Stomach (tissue), 19 donors: ENCODE measurements at regions of chr9 and their contacts with region 1.

Region 1: GRCh38 chr9:109817846-109818472 is 38.0 kb downstream of the PALM2AKAP2 start:
- DNase-seq: peak; percentile 61 to 97
- H3K4me3 ChIP-seq: no peak overlapping the region
- H3K27ac ChIP-seq: peak overlapping the region in 3 of 5 donors; percentile 30 to 58 (median 49)
- H3K4me1 ChIP-seq: peaks cover 0 to 10% (median 0%) of the 10 kb centered on the region in 4 donors
- H3K27me3 ChIP-seq: peaks cover 0 to 3% (median 0%) of the 10 kb centered on the region in 3 donors
- CTCF ChIP-seq: peak in 5 of 7 experiments; percentile 41 to 81 (median 74)
- EP300 ChIP-seq: no peak
- POLR2A ChIP-seq: no peak

Region 2: DNA sequence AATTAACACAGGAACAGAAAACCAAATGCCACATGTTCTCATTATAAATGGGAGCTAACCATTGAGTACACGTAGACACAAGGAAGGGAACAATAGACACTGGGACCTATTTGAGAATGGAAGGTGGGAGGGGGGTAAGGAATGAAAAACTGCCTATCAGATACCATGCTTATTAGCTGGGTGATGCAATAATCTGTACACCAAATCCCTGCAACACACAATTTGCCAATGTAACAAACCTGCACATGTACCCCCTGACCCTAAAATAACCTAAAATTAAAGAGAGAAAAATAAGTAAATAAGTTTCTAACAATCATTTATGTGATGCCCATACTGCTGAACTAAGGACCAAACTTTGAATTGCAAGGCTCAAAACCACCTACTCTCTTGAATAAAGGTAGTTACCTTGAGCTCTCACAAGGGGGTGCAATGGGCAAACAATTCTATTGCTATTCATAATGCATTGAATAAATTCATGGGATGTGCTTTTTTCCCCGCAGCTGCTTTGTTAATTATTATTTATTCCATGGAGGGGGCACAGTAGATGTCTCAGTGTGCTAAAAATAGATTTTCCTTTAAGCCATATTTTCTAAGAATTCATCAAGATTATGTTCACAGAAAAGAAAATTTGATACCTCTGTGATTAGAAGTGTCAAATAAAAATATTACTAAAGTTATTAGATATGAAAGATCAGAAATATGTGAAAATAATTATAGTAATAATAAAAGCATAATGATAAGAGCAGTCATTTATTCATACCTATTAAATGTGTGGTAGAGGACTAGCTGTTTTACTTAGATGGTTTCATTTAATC is 243.7 kb before region 1 on chr9:
- intact Hi-C with region 1: loop called (anchors 5 kb)
- DNase-seq: peak in 1 of 2 donors; percentile 82
- H3K4me3 ChIP-seq: no peak overlapping the region
- H3K27ac ChIP-seq: no peak overlapping the region
- H3K4me1 ChIP-seq: no peaks in the 10 kb centered on the region
- H3K27me3 ChIP-seq: no peaks in the 10 kb centered on the region
- CTCF ChIP-seq: peak in 5 of 7 experiments; percentile 41 to 68 (median 55)
- EP300 ChIP-seq: no peak
- POLR2A ChIP-seq: no peak